ENCODE measurements at regions of chr4 and their contacts with region 1.

Region 1: DNA sequence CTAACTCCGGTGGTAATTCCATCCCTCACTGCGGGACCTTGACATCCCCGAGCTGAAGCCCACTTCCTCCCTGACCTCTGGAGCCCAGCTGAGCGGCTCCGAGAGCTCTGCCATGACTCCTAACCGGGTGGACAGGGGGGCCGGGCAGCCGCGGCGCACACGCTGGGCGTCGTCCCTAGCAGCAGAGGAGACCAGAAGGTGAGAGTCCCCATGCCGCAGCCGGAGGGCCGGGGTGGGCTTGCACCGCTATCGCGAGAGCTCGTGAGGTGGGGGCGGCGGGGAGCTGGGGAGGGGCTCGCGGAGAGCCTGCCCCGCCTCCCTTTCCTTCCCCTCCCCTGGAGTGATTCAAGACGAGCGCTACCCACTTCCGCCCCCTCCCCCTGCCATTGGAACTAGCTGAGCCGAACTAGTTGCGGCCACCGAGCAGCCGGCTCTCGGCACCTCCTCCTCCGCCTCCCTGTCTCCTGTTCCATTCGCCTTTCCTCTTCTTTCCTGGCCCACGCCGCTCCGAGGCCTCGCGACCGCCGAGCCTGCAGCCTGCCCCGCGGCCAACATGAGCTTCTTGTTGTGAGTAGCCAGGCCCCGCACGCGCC is at the start of gene MOB1B:
- DNase-seq: peak; percentile 62 to 90 (median 84)
- ATAC-seq: peak; percentile 95
- H3K4me3 ChIP-seq: peak within 1 kb of the TSS; percentile 86 to 88
- H3K4me3 Mint-ChIP-seq: peak within 1 kb of the TSS; percentile 99
- H3K27ac ChIP-seq: peak within 1 kb of the TSS; percentile 40 to 46
- H3K27ac Mint-ChIP-seq: peak within 1 kb of the TSS; percentile 86
- H3K4me1 ChIP-seq: peaks cover 19% of the 10 kb centered on the region
- H3K4me1 Mint-ChIP-seq: peaks cover 36% of the 10 kb centered on the region
- H3K27me3 ChIP-seq: no peaks in the 10 kb centered on the region
- H3K27me3 Mint-ChIP-seq: no peaks in the 10 kb centered on the region
- CTCF ChIP-seq: peak; percentile 39
- total RNA-seq, gene MOB1B: 9.7 to 11.1 TPM

Region 2: GRCh38 chr4:69749771-69750170 is 1152.3 kb before region 1 on chr4:
- CTCF ChIA-PET with region 1: no interaction called
- POLR2A ChIA-PET with region 1: no interaction called
- intact Hi-C with region 1: loop called in 1 of 2 experiments (anchors 10 kb)
- DNase-seq: no peak
- ATAC-seq: no peak
- H3K4me3 ChIP-seq: no peak overlapping the region
- H3K4me3 Mint-ChIP-seq: no peak overlapping the region
- H3K27ac ChIP-seq: no peak overlapping the region
- H3K27ac Mint-ChIP-seq: no peak overlapping the region
- H3K4me1 ChIP-seq: no peaks in the 10 kb centered on the region
- H3K4me1 Mint-ChIP-seq: peaks cover 9% of the 10 kb centered on the region
- H3K27me3 ChIP-seq: no peaks in the 10 kb centered on the region
- H3K27me3 Mint-ChIP-seq: no peaks in the 10 kb centered on the region
- CTCF ChIP-seq: no peak

Region 3: GRCh38 chr4:70839589-70840093 is 62.4 kb before region 1 on chr4 and contains the start of gene GRSF1:
- CTCF ChIA-PET with region 1: interaction called, 5 read pairs
- POLR2A ChIA-PET with region 1: interaction called, 15 read pairs
- intact Hi-C with region 1: loop called (anchors 1 to 2 kb)
- DNase-seq: peak; percentile 90 to 97 (median 95)
- ATAC-seq: peak; percentile 94
- H3K4me3 ChIP-seq: peak within 1 kb of the TSS; percentile 65 to 80
- H3K4me3 Mint-ChIP-seq: peak within 1 kb of the TSS; percentile 97
- H3K27ac ChIP-seq: peak within 1 kb of the TSS; percentile 80
- H3K27ac Mint-ChIP-seq: peak within 1 kb of the TSS; percentile 97
- H3K4me1 ChIP-seq: peaks cover 29% of the 10 kb centered on the region
- H3K4me1 Mint-ChIP-seq: peaks cover 31% of the 10 kb centered on the region
- H3K27me3 ChIP-seq: no peaks in the 10 kb centered on the region
- H3K27me3 Mint-ChIP-seq: no peaks in the 10 kb centered on the region
- CTCF ChIP-seq: no peak
- total RNA-seq, gene GRSF1: 32.1 to 35.7 TPM

Region 4: GRCh38 chr4:70863099-70863790 is 38.8 kb before region 1 on chr4:
- CTCF ChIA-PET with region 1: no interaction called
- POLR2A ChIA-PET with region 1: no interaction called
- intact Hi-C with region 1: no loop called
- DNase-seq: peak in 1 of 9 experiments; percentile 13
- ATAC-seq: no peak
- H3K4me3 ChIP-seq: no peak overlapping the region
- H3K4me3 Mint-ChIP-seq: no peak overlapping the region
- H3K27ac ChIP-seq: no peak overlapping the region
- H3K27ac Mint-ChIP-seq: no peak overlapping the region
- H3K4me1 ChIP-seq: no peaks in the 10 kb centered on the region
- H3K4me1 Mint-ChIP-seq: peaks cover 9% of the 10 kb centered on the region
- H3K27me3 ChIP-seq: no peaks in the 10 kb centered on the region
- H3K27me3 Mint-ChIP-seq: no peaks in the 10 kb centered on the region
- CTCF ChIP-seq: no peak